ENCODE measurements at regions of chr12 and their contacts with region 1.

Region 1: GRCh38 chr12:91978143-91978542 is 167.5 kb downstream of the BTG1 start:
- DNase-seq: peak in 12 of 14 experiments; percentile 8 to 85 (median 44)
- ATAC-seq: peak; percentile 88
- H3K4me3 ChIP-seq: no peak overlapping the region
- H3K4me3 Mint-ChIP-seq: peak overlapping the region; percentile 3
- H3K27ac ChIP-seq: peak overlapping the region; percentile 2 to 52
- H3K27ac Mint-ChIP-seq: peak overlapping the region; percentile 79
- H3K4me1 ChIP-seq: peaks cover 24% of the 10 kb centered on the region
- H3K4me1 Mint-ChIP-seq: peaks cover 55% of the 10 kb centered on the region
- H3K27me3 ChIP-seq: no peaks in the 10 kb centered on the region
- H3K27me3 Mint-ChIP-seq: no peaks in the 10 kb centered on the region
- CTCF ChIP-seq: no peak

Region 2: GRCh38 chr12:91687052-91688017 is 290.8 kb before region 1 on chr12:
- CTCF ChIA-PET with region 1: no interaction called
- POLR2A ChIA-PET with region 1: no interaction called
- intact Hi-C with region 1: loop called in 1 of 2 experiments (anchors 1 kb)
- DNase-seq: peak in 7 of 14 experiments; percentile 2 to 66 (median 52)
- ATAC-seq: peak; percentile 91
- H3K4me3 ChIP-seq: no peak overlapping the region
- H3K4me3 Mint-ChIP-seq: peak overlapping the region; percentile 5
- H3K27ac ChIP-seq: no peak overlapping the region
- H3K27ac Mint-ChIP-seq: peak overlapping the region; percentile 65
- H3K4me1 ChIP-seq: no peaks in the 10 kb centered on the region
- H3K4me1 Mint-ChIP-seq: peaks cover 23% of the 10 kb centered on the region
- H3K27me3 ChIP-seq: no peaks in the 10 kb centered on the region
- H3K27me3 Mint-ChIP-seq: no peaks in the 10 kb centered on the region
- CTCF ChIP-seq: no peak

Region 3: DNA sequence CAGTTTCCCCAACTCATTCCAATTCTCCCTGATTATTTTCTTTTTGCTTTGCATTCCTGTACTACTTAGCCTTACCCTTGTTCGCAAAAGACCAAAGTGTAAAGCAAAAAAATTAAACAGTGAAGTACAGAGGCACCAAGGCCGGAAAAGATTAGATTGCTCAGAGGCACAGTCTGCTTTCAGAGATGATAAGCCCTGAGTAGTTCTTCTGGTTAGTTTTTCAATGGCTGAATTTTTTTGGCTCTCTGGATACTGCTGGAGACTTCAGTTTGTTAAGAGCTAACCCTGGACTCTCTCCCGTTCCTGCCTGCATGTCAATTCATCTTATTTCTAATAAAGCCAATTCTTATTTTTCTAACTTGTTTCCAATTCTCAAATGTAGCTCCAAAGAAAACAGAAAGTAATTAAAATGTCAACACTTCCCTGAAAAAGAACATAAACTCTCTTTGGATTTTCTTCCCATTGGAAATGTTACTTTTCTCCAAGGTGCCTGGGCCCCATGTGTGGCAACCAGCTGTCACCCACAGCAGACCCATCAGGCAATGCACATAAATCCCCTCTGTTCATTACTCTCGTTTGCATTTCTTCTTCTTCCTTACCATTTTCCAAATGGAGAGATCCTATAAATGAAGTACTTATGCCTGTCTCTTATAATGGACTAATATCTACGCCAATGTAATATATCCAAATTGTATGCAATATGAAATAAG is 24.7 kb after region 1 on chr12:
- CTCF ChIA-PET with region 1: no interaction called
- POLR2A ChIA-PET with region 1: no interaction called
- intact Hi-C with region 1: no loop called
- DNase-seq: no peak
- ATAC-seq: peak; percentile 34
- H3K4me3 ChIP-seq: no peak overlapping the region
- H3K4me3 Mint-ChIP-seq: peak overlapping the region; percentile 70
- H3K27ac ChIP-seq: peak overlapping the region in 1 of 2 donors; percentile 10
- H3K27ac Mint-ChIP-seq: peak overlapping the region; percentile 85
- H3K4me1 ChIP-seq: no peaks in the 10 kb centered on the region
- H3K4me1 Mint-ChIP-seq: peaks cover 74% of the 10 kb centered on the region
- H3K27me3 ChIP-seq: no peaks in the 10 kb centered on the region
- H3K27me3 Mint-ChIP-seq: no peaks in the 10 kb centered on the region
- CTCF ChIP-seq: no peak

Region 4: GRCh38 chr12:92324849-92325500 is 346.8 kb after region 1 on chr12:
- CTCF ChIA-PET with region 1: no interaction called
- POLR2A ChIA-PET with region 1: no interaction called
- intact Hi-C with region 1: no loop called
- DNase-seq: no peak
- ATAC-seq: no peak
- H3K4me3 ChIP-seq: no peak overlapping the region
- H3K4me3 Mint-ChIP-seq: no peak overlapping the region
- H3K27ac ChIP-seq: no peak overlapping the region
- H3K27ac Mint-ChIP-seq: no peak overlapping the region
- H3K4me1 ChIP-seq: peaks cover 13% of the 10 kb centered on the region
- H3K4me1 Mint-ChIP-seq: peaks cover 48% of the 10 kb centered on the region
- H3K27me3 ChIP-seq: no peaks in the 10 kb centered on the region
- H3K27me3 Mint-ChIP-seq: no peaks in the 10 kb centered on the region
- CTCF ChIP-seq: no peak